Dorsolateral prefrontal cortex (tissue), 120 donors: ENCODE measurements at regions of chr10 and their contacts with region 1.

Region 1: DNA sequence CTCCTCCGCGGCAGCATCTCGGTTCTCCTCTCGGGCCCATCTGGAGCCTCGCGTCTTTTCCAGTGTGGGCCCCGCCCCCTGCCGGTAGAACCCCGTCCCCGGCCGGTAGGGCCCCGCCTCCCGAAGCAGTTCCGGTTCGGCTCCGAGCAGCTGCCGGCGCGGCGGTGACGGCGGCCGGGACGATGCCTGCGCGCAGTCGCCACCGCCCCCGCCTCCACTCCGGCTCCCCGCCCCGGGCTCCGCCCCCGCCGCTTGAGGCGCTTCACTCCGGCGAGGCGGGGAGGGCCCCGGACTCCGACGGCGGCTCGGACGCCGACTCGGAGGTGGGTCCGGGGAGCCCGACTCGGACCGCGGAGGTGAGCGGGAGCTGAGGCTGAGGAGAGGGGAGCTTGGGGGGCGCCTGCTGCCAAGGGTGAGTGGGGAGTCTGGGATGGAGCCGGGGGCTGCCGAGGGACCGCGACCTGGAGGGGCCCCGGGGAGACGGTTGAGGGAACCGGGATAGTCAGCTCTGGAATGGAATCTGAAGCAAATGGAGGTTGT is at the start of gene SAMD8:
- DNase-seq: peak; percentile 89 to 95 (median 93)
- H3K4me3 ChIP-seq: peak within 1 kb of the TSS; percentile 66 to 98 (median 91)
- H3K27ac ChIP-seq: peak within 1 kb of the TSS; percentile 85 to 99 (median 97)
- H3K27me3 ChIP-seq: no peaks in the 10 kb centered on the region
- CTCF ChIP-seq: peak in 54 of 56 donors; percentile 40 to 83 (median 68)
- total RNA-seq, gene SAMD8: 55.2 to 91.8 (median 66.8) TPM

Region 2: GRCh38 chr10:74151056-74151878 is 960.2 kb before region 1 on chr10 and contains the start of gene ADK:
- intact Hi-C with region 1: loop called (anchors 5 to 10 kb)
- DNase-seq: peak; percentile 97 to 100 (median 99)
- H3K4me3 ChIP-seq: peak within 1 kb of the TSS; percentile 59 to 99 (median 90)
- H3K27ac ChIP-seq: peak within 1 kb of the TSS; percentile 31 to 96 (median 90)
- H3K27me3 ChIP-seq: no peaks in the 10 kb centered on the region
- CTCF ChIP-seq: peak in 48 of 56 donors; percentile 7 to 60 (median 34)
- total RNA-seq, gene ADK: 26.7 to 48.2 (median 34.8) TPM

Region 3: GRCh38 chr10:75042292-75042974 is 69.0 kb before region 1 on chr10:
- intact Hi-C with region 1: no loop called
- DNase-seq: no peak
- H3K4me3 ChIP-seq: no peak overlapping the region
- H3K27ac ChIP-seq: no peak overlapping the region
- H3K27me3 ChIP-seq: peaks cover 0 to 14% (median 0%) of the 10 kb centered on the region in 45 donors
- CTCF ChIP-seq: no peak

Region 4: GRCh38 chr10:75210282-75211006 is 99.0 kb after region 1 on chr10 and contains the start of gene VDAC2:
- intact Hi-C with region 1: loop called (anchors 5 kb)
- DNase-seq: peak; percentile 82 to 95 (median 88)
- H3K4me3 ChIP-seq: peak within 1 kb of the TSS; percentile 68 to 100 (median 96)
- H3K27ac ChIP-seq: peak within 1 kb of the TSS; percentile 93 to 100 (median 99)
- H3K27me3 ChIP-seq: no peaks in the 10 kb centered on the region
- CTCF ChIP-seq: peak in 29 of 56 donors; percentile 4 to 55 (median 21)
- total RNA-seq, gene VDAC2: 100 to 208 (median 160) TPM